GM10248 (cell line): ENCODE measurements at regions of chr20 and their contacts with region 1.

Region 1: DNA sequence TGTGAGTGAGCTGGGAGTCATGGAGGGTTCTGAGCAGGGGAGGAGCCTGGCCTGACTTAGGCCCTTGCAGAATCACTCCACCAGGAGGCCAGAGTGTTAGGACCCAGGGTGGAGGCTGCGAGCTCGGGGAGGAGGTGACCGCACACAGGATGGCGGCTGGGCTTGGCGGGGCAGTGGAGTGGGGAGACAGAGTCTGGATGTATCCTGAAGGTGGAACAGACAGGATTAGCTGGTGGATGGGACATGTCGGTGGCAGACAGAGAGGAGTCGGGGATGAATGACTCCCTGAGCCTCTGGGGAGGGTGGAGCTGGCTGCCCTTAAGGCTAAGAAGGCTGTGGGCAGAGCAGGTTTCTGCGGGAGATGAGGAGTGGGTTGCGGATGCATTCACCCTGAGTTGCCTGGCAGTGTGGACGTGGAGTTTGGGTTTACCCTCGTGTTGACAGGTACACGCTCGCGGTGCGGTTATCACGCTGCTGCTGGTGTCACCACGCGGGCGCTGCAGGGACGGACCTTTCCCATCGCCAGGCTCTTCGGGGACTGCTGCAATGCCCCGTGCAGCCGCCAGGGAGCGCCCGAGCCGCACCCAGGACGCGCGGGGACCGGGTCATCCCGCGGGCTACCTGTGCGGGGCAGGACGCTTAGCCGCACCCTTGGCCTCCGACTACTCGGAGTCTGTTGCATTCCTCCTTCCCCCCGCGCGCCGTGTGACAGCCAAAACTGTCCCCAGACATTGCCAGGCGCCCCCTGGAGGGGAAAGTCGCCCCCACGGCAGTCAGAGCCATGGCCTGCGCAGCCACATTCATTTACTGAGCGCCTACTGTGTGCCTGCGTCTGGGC is 43.0 kb upstream of the PTGIS start:
- DNase-seq: peak; percentile 87
- CTCF ChIP-seq: peak; percentile 97

Region 2: GRCh38 chr20:49541733-49542513 is 69.0 kb before region 1 on chr20:
- CTCF ChIA-PET with region 1: interaction called, 169 read pairs
- POLR2A ChIA-PET with region 1: no interaction called
- DNase-seq: peak; percentile 80
- CTCF ChIP-seq: peak; percentile 83

Region 3: DNA sequence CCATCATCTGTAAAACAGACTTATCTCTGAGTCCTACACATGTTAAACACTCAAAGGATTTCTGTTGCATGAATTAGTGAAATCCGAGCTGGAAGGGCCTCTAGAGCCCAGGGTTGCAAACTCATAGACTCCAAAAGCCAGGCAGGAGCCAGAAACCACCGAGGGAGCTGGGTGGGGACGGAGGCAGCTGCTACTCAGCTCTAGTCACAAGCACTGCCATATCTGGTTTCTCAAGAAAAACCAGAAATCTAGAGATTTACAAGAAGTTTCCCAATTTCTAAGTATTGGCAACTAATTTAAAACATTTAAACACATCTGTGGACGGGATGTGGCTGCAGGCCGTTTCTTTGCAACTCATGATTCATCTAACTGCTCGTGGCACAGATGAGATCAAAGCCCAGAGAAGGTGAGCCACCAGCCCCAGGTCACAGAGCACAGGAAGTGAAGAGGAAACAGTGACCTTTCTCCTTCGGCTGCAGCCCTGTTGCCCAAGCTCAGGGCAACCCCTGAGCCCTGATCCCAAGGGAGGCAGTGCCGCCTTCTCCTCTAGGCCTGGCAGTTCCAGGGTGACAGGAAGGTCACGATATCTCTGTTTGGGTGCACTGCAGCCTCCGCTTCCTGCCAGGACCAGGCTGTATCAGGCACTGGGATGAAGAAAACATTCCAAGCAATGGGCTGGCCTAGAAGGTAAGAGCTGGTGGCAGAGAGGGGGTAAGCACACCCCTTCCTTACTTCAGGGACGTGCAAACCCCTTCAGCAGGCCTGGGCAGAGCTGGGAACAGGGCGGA is 16.6 kb before region 1 on chr20:
- CTCF ChIA-PET with region 1: interaction called, 42 read pairs
- POLR2A ChIA-PET with region 1: no interaction called
- DNase-seq: no peak
- CTCF ChIP-seq: no peak

Region 4: GRCh38 chr20:49676581-49677291 is 65.8 kb after region 1 on chr20:
- CTCF ChIA-PET with region 1: interaction called, 10 read pairs
- POLR2A ChIA-PET with region 1: no interaction called
- DNase-seq: peak; percentile 50
- CTCF ChIP-seq: no peak

Region 5: GRCh38 chr20:49821870-49822331 is 211.0 kb after region 1 on chr20:
- CTCF ChIA-PET with region 1: interaction called, 14 read pairs
- POLR2A ChIA-PET with region 1: no interaction called
- DNase-seq: no peak
- CTCF ChIP-seq: peak; percentile 40

Region 6: DNA sequence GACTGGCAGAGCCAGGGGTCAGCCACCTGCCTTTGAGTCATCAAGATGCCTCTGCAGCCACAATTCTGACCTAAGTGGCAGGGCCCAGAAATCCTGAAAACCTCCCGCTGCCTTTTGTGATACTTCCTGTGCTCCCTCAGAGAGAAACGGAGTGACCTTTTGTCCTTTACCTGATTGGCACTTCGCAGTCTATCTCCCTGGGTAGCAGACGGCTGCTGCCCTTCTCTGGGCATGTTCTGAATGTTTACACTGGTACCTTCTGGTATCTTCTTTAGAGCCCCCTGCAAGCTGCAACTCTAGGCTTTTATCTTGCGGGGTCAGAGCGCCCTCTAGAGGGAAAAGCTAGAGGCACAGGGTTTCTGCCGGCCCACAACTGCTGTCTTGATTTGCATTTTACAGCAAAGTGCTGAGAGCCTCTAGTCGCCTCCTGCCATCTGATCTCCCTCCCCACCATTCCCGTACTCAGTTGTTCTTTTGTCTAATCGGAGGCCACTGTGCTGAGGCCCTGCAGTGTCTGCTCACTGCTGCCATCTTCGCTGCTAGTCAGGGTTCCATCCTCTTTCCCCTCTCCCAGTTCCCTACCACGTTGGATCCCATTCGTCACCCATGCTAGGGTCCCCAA is 277.5 kb after region 1 on chr20:
- CTCF ChIA-PET with region 1: interaction called, 75 read pairs
- POLR2A ChIA-PET with region 1: no interaction called
- DNase-seq: peak; percentile 84
- CTCF ChIP-seq: peak; percentile 80